ENCODE measurements at regions of chr17 and their contacts with region 1.

Region 1: GRCh38 chr17:4703330-4703691 is 626 bp downstream of the PELP1 start:
- DNase-seq: no peak
- H3K4me3 Mint-ChIP-seq: peak overlapping the region; percentile 95
- H3K27ac Mint-ChIP-seq: peak overlapping the region; percentile 94
- H3K4me1 Mint-ChIP-seq: peaks cover 41% of the 10 kb centered on the region
- H3K27me3 Mint-ChIP-seq: no peaks in the 10 kb centered on the region

Region 2: GRCh38 chr17:4554997-4555799 is 148.1 kb before region 1 on chr17 and contains the start of gene MYBBP1A:
- intact Hi-C with region 1: loop called (anchors 5 kb)
- DNase-seq: peak; percentile 99
- H3K4me3 Mint-ChIP-seq: peak within 1 kb of the TSS; percentile 90
- H3K27ac Mint-ChIP-seq: peak within 1 kb of the TSS; percentile 95
- H3K4me1 Mint-ChIP-seq: peaks cover 25% of the 10 kb centered on the region
- H3K27me3 Mint-ChIP-seq: no peaks in the 10 kb centered on the region
- total RNA-seq, gene MYBBP1A: 178 and 181 TPM in 2 replicates